Natural killer cell (primary cell): ENCODE measurements at regions of chr3 and their contacts with region 1.

Region 1: DNA sequence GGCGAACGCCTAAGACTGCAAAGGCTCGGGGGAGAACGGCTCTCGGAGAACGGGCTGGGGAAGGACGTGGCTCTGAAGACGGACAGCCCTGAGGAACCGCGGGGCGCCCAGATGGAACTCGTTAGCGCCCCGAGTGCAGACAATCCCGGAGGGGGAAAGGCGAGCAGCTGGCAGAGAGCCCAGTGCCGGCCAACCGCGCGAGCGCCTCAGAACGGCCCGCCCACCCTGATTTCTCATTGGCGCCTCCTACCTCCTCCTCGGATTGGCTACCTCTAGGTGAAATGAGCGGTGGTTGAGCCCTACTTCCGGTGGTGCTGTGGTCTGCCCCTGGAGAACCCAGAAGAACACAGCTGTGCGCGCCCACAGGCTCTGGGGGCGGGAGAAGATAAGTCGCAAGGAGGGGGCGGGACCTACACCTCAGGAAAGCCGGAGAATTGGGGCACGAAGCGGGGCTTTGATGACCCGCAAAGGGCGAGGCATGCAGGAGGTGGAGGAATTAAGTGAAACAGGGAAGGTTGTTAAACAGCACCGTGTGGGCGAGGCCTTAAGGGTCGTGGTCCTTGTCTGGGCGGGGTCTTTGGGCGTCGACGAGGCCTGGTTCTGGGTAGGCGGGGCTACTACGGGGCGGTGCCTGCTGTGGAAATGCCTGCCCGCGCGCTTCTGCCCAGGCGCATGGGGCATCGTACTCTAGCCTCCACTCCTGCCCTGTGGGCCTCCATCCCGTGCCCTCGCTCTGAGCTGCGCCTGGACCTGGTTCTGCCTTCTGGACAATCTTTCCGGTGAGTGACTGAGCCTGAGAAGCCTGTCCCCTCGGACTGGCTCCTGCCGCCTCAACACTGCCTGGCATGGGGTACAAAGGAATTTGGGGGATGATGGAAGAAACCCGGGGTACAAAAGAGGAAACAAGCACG is at the start of gene OGG1:
- DNase-seq: peak; percentile 96 to 97
- ATAC-seq: peak; percentile 89 to 97 (median 95)
- H3K4me3 ChIP-seq: peak within 1 kb of the TSS; percentile 67
- H3K4me3 Mint-ChIP-seq: peak within 1 kb of the TSS; percentile 94
- H3K27ac ChIP-seq: peak within 1 kb of the TSS; percentile 54
- H3K27ac Mint-ChIP-seq: peak within 1 kb of the TSS; percentile 91
- H3K4me1 ChIP-seq: peaks cover 41% of the 10 kb centered on the region
- H3K4me1 Mint-ChIP-seq: peaks cover 49 to 50% of the 10 kb centered on the region in 2 donors
- H3K27me3 ChIP-seq: no peaks in the 10 kb centered on the region
- H3K27me3 Mint-ChIP-seq: no peaks in the 10 kb centered on the region
- CTCF ChIP-seq: no peak
- total RNA-seq, gene OGG1: 33.4 to 52.1 (median 34.7) TPM

Region 2: DNA sequence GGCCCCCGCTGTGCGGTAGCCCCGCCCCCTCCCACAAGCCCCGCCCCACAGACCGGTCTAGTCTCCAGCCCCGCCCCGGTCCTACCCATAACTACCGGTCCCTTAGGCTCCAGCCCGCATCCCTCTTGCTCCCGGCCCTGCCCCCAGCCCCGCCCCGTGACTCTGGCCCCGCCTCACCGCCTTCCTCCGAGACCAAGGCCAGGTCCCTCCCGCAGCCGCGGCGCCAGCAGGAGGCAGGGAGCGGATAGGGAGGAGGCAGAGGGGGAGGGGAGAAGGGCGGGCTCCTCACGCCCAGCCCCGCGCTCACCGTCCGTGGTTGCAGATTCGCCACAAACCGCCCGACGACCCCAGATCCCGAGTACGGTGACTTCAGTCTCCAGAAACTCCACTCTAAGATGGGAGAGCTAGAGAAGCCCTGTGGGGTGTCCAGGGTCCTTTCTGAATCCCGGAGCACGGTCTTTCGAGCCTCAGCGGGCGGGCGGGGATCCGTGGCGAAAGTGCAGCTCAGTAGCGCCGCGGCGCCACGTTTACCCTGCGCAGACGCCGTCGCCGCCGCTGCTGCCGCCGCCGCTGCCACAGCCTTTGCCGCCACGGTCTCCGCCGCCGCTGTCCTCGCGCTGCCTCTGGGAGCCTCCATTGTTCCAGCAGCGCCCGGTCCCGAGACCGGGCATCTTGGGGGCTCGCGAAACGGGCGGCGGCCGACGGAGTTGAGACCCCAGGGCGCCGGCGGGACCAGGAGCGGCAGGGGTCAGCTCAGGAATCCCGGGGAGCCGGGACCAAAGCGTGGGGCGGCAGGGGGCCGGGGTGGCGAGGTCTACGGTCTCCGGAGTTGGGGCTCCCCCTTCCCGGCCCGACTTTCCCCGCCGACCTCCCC is 18.5 kb before region 1 on chr3 and contains the start of gene BRPF1:
- intact Hi-C with region 1: loop called (anchors 1 kb)
- DNase-seq: peak; percentile 93 to 99
- ATAC-seq: peak; percentile 89 to 96 (median 90)
- H3K4me3 ChIP-seq: peak within 1 kb of the TSS; percentile 96
- H3K4me3 Mint-ChIP-seq: peak within 1 kb of the TSS; percentile 98
- H3K27ac ChIP-seq: peak within 1 kb of the TSS; percentile 96
- H3K27ac Mint-ChIP-seq: peak within 1 kb of the TSS; percentile 93 to 94
- H3K4me1 ChIP-seq: peaks cover 40% of the 10 kb centered on the region
- H3K4me1 Mint-ChIP-seq: peaks cover 49 to 65% of the 10 kb centered on the region in 2 donors
- H3K27me3 ChIP-seq: no peaks in the 10 kb centered on the region
- H3K27me3 Mint-ChIP-seq: no peaks in the 10 kb centered on the region
- CTCF ChIP-seq: no peak
- total RNA-seq, gene BRPF1: 45.1 to 72.1 (median 66.5) TPM

Region 3: GRCh38 chr3:9769426-9770275 is 19.8 kb after region 1 on chr3 and contains the start of gene CAMK1:
- intact Hi-C with region 1: loop called (anchors 2 kb)
- DNase-seq: peak; percentile 57 to 64
- ATAC-seq: peak; percentile 89 to 97 (median 96)
- H3K4me3 ChIP-seq: peak within 1 kb of the TSS; percentile 31
- H3K4me3 Mint-ChIP-seq: peak within 1 kb of the TSS; percentile 86
- H3K27ac ChIP-seq: no peak within 1 kb of the TSS
- H3K27ac Mint-ChIP-seq: peak within 1 kb of the TSS in 1 of 2 donors; percentile 84
- H3K4me1 ChIP-seq: peaks cover 36% of the 10 kb centered on the region
- H3K4me1 Mint-ChIP-seq: peaks cover 35 to 49% of the 10 kb centered on the region in 2 donors
- H3K27me3 ChIP-seq: no peaks in the 10 kb centered on the region
- H3K27me3 Mint-ChIP-seq: no peaks in the 10 kb centered on the region
- CTCF ChIP-seq: no peak
- total RNA-seq, gene CAMK1: 7.4 to 20.4 (median 8.7) TPM

Region 4: DNA sequence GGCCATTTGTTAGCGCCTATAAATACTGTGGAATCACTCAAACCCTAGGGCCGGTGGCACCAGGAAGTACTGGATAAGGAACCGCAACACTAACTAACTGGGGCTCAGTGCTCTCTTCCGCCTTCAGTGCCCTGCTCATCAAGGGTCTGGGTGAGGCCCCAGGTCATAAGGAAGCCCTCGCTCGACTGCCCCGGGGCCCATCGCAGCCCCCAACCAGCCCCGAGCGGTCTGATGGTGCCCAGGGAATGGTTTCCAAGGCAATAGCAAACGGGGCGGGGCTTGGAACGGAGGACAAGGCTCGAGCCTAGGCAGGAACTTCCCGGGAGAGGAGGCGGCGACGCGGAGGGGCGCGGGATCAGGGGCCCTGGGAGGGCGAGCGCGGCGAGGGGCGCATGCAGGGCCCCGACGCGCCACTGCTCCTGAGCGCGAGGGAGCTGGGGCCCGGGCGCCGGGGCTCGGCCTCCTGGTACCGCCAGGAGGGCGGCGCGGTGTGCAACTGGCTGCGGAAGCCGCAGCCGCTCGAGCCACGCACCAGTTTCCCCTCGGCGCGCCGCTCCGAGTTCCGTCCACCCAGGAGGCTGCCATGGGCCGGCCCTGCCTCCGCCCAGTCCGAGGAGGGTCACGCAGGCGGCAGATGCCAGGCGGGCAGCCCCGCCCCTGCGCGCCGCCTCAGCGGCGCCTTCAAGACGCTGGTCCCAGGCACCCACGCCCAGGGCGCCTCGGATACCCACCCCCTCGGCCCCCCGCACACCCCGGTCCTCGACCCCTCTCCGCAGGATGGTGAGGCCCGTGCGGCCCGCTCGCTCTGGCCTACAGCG is 59.9 kb after region 1 on chr3 and contains the start of gene TTLL3:
- intact Hi-C with region 1: loop called (anchors 5 kb)
- DNase-seq: peak; percentile 44 to 67
- ATAC-seq: peak; percentile 50 to 79 (median 65)
- H3K4me3 ChIP-seq: peak within 1 kb of the TSS; percentile 58
- H3K4me3 Mint-ChIP-seq: peak within 1 kb of the TSS; percentile 90
- H3K27ac ChIP-seq: peak within 1 kb of the TSS; percentile 90
- H3K27ac Mint-ChIP-seq: peak within 1 kb of the TSS; percentile 93
- H3K4me1 ChIP-seq: peaks cover 31% of the 10 kb centered on the region
- H3K4me1 Mint-ChIP-seq: peaks cover 39 to 58% of the 10 kb centered on the region in 2 donors
- H3K27me3 ChIP-seq: no peaks in the 10 kb centered on the region
- H3K27me3 Mint-ChIP-seq: no peaks in the 10 kb centered on the region
- CTCF ChIP-seq: no peak
- total RNA-seq, gene TTLL3: 133 to 137 (median 136) TPM